ENCODE measurements at regions of chr5 and their contacts with region 1.

Region 1: DNA sequence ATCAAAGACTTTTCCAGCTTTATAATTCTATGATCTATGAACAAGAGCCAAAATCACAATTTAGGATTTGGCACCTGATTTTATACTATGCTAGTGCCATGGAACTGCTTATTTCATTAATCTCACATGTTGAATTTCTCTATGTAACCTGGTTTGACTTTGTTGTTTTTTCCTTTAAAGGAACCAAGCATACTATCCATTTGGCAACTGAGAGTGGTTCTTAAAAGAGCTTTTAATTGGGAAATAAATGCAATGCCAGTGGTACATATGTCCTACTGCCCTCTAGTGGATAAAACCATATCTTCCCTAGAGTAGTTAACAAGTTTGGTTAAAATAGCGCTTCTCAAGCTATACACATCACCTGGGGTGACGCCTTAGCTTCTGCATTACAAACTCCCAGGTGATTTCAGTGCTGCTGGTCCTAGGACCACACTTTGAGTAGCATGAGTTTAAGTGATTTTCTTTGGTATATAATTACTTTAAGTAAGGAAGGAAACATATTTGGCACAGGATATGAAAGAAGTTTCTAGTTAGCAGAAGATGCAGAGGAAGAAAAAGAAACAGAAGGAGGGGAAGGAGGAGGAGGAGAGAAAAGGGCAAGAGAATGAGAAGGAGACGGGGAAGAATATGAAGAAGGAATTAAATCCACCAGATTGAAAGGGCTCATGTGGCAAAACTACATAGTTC is 56.8 kb downstream of the FGF10 start:
- DNase-seq: no peak
- H3K4me3 Mint-ChIP-seq: no peak overlapping the region
- H3K27ac Mint-ChIP-seq: no peak overlapping the region
- H3K4me1 Mint-ChIP-seq: no peaks in the 10 kb centered on the region
- H3K27me3 Mint-ChIP-seq: no peaks in the 10 kb centered on the region

Region 2: DNA sequence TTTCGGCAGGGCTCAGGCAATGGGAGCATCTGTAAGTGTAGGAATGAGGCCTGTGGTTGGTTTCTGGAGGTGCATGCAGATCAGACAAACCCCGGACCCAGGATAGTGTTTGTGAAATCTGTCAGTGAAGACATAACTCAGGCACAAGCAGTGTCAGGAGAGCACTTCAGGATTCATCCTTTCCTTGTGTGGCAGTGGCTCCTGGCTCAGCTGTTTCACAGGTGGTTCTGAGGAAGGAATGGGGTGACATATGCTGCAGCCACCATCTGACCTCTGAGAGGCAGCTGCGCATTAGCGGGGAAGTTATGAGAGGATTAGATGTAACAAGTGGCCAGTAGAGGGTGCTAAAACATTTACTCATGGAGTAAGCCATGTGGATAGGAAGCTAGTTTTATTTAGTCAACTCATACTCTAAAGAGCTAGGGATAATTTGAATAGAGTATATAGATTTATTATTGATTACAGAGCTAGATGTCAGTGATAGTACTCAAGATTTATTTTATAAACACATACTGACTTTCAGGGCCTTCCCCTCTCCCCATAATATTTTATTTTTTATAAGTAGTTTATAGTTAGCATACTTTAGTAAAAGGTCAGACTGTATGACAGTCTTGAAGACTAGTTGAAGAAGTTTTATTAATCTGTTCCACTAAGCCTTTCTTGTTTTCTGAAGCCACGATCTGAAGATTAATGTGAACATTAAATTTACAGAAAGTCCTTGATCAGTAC is 701.1 kb before region 1 on chr5:
- intact Hi-C with region 1: loop called (anchors 2 kb)
- DNase-seq: peak; percentile 31
- H3K4me3 Mint-ChIP-seq: no peak overlapping the region
- H3K27ac Mint-ChIP-seq: no peak overlapping the region
- H3K4me1 Mint-ChIP-seq: peaks cover 6% of the 10 kb centered on the region
- H3K27me3 Mint-ChIP-seq: no peaks in the 10 kb centered on the region

Region 3: GRCh38 chr5:43661102-43661501 is 671.3 kb before region 1 on chr5:
- intact Hi-C with region 1: loop called (anchors 2 kb)
- DNase-seq: no peak
- H3K4me3 Mint-ChIP-seq: no peak overlapping the region
- H3K27ac Mint-ChIP-seq: no peak overlapping the region
- H3K4me1 Mint-ChIP-seq: no peaks in the 10 kb centered on the region
- H3K27me3 Mint-ChIP-seq: no peaks in the 10 kb centered on the region

Region 4: DNA sequence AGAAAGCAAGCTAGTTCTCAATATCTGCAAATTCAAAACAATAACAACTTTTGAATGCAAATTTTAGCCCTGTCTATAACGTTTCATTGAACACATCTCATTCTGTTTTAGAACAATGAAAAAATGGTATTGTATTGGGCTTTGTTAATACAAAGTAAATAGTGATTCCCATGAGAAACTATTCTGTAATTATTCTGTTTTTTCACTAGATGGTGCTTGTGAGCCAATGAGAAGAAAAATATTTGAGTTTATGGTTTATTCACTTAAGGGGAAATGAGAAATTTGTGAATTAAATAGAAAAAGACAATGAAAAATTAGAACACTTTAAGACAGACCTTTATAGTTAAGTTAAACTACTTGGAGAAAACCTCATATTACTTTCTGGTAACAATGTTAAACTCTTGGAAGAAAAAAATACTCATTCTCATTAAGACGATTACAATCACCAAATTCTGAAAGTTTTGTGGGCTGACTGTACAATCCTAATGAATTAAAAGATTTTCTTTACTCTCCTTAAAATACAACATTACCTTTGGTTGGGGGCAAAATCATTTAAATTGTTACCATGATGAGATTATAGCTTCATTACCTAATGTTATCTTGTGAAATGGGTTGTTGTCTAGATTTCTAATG is 602.5 kb before region 1 on chr5:
- intact Hi-C with region 1: loop called (anchors 2 kb)
- DNase-seq: no peak
- H3K4me3 Mint-ChIP-seq: no peak overlapping the region
- H3K27ac Mint-ChIP-seq: no peak overlapping the region
- H3K4me1 Mint-ChIP-seq: no peaks in the 10 kb centered on the region
- H3K27me3 Mint-ChIP-seq: peaks cover 2% of the 10 kb centered on the region

Region 5: DNA sequence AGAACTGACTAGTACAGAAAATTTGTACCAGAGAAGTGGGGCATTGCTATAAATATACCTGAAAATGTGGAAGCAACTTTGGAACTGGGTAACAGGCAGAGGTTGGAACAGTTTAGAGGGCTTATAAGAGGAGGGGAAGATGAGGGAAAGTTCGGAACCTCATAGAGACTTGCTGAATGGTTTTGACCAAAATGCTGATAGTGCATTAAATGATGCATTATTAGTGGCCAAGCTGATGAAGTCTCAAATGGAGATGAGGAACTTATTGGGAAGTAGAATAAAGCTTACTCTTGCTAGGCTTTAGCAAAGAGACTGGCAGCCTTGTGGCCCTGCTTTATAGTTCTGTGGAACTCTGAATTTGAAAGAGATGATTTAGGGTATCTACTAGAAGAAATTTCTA is 133.0 kb before region 1 on chr5:
- intact Hi-C with region 1: no loop called
- DNase-seq: no peak
- H3K4me3 Mint-ChIP-seq: no peak overlapping the region
- H3K27ac Mint-ChIP-seq: no peak overlapping the region
- H3K4me1 Mint-ChIP-seq: no peaks in the 10 kb centered on the region
- H3K27me3 Mint-ChIP-seq: no peaks in the 10 kb centered on the region